ENCODE measurements at regions of chr1 and their contacts with region 1.

Region 1: DNA sequence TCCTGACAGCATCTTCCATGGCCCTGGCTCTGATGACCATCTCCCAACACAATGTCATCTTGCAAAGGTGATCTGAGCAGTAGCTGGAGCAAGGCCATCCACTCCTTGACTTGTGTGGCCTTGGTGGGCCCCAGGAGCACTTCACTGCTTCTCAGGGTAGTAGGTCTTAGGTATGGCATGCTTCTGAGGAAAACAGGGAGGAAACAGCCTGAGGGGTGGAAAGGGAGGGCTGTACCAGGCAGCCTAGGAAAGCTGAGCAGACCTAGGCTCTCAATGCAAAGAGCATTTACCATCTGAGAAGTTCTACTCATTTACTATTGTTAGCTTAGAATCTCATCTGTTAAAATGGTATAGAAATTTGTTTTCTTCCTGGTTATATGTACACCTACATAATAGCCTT is 120.8 kb upstream of the NBPF11 start:
- DNase-seq: no peak
- ATAC-seq: no peak
- H3K4me3 ChIP-seq: no peak overlapping the region
- H3K27ac ChIP-seq: no peak overlapping the region
- H3K4me1 ChIP-seq: no peaks in the 10 kb centered on the region
- H3K27me3 ChIP-seq: no peaks in the 10 kb centered on the region

Region 2: DNA sequence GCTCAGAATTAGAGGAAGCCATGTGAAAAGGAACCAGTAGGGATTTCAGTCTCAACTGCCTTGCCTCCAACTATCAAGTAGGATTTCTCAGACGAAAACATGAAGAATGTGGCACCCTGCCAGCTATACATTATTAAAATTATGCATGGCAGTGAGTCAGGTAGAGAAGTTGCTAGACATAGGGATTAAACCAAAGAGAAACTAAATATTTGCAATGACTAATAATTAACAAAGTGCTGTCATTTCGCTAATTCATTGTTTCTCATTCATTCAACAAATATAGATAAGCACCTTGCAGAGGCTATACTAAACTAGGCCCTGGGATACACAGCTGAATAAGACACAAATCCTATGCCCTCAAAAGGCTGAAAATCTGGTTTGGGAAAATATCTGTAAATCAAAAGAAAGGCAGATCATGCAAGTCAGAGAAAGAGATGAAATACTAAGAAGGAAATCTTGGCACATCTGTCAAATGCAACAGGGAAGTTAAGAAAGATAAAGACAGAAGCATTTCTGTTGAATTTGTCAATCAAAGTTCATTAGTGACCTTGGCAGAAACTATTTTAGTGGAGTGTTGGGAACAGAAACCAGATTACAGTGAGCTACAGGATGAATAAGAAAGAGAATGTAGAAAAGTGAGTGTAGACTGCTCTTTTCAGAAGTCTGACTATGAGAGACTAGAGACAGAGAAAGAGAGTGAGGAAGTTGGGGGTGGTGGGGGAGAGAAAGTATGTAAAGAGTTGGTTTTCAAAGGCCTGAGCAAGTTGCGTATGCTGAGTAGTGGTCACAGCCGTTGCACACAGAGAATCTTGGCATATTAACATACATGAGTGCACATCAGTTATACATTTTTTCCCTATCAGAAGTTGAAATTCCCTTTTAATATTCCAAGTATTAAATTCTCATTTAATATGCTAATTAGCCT is 106.1 kb before region 1 on chr1:
- intact Hi-C with region 1: loop called in 1 of 2 experiments (anchors 10 kb)
- DNase-seq: no peak
- ATAC-seq: no peak
- H3K4me3 ChIP-seq: no peak overlapping the region
- H3K27ac ChIP-seq: no peak overlapping the region
- H3K4me1 ChIP-seq: no peaks in the 10 kb centered on the region
- H3K27me3 ChIP-seq: no peaks in the 10 kb centered on the region